ENCODE measurements at regions of chrX and their contacts with region 1.

Region 1: GRCh38 chrX:72276478-72276953 is 532 bp downstream of the RPS4X start:
- DNase-seq: no peak
- ATAC-seq: no peak
- H3K4me3 ChIP-seq: peak overlapping the region; percentile 99
- H3K27ac ChIP-seq: peak overlapping the region; percentile 91
- H3K4me1 ChIP-seq: peaks cover 7 to 11% of the 10 kb centered on the region in 2 experiments; a peak in 4 of 5 replicates
- H3K27me3 ChIP-seq: no peaks in the 10 kb centered on the region
- CTCF ChIP-seq: no peak
- EP300 ChIP-seq: no peak
- POLR2A ChIP-seq: no peak
- RAD21 ChIP-seq: no peak

Region 2: DNA sequence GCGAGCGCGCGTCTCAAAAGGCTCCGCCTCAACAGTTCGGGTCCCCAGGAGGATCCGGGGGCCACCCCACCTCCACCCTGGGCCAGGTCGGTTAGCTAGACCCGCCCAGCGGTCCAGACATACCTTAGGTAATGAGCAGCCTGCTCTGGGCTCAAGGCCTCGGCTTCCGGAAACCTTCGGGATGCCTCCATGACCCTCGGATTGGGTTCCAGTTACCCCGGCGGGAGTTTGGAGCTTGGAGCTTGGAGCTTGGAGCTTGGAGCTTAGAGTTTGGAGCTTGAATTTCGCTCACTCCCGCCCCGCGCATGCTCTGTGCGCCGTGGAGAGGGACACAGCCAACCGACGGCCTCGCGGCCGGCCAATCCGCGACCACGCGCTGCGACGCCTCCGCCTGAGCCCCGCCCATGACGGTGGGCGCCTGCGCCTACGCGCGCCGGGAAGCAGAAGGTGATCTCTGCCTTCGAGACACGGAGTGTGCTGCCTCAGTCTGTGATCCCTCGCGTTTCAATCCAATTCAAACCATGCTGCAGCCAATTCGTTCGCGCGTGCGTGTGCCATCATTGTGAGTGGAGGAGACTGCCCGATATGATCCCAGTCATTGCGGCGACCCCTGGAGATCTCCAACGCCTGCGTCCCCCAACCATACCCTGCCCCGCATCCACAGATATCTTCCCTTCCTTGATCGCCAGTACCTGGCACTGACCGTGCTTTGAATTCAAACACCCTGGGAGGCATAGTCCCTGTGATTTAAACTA is 37.6 kb before region 1 on chrX and contains the start of gene ERCC6L:
- CTCF ChIA-PET with region 1: no interaction called
- POLR2A ChIA-PET with region 1: interaction called, 16 read pairs
- in situ Hi-C with region 1: no loop called
- intact Hi-C with region 1: no loop called
- DNase-seq: peak; percentile 85 to 89 (median 86)
- ATAC-seq: peak; percentile 93
- H3K4me3 ChIP-seq: peak within 1 kb of the TSS; percentile 56
- H3K27ac ChIP-seq: peak within 1 kb of the TSS; percentile 82
- H3K4me1 ChIP-seq: peaks cover 0 to 3% of the 10 kb centered on the region in 2 experiments; a peak in 4 of 5 replicates
- H3K27me3 ChIP-seq: no peaks in the 10 kb centered on the region
- CTCF ChIP-seq: no peak
- EP300 ChIP-seq: no peak
- POLR2A ChIP-seq: peak; percentile 90
- RAD21 ChIP-seq: no peak
- polyA plus RNA-seq, gene ERCC6L: 6.4 to 13.3 TPM

Region 3: DNA sequence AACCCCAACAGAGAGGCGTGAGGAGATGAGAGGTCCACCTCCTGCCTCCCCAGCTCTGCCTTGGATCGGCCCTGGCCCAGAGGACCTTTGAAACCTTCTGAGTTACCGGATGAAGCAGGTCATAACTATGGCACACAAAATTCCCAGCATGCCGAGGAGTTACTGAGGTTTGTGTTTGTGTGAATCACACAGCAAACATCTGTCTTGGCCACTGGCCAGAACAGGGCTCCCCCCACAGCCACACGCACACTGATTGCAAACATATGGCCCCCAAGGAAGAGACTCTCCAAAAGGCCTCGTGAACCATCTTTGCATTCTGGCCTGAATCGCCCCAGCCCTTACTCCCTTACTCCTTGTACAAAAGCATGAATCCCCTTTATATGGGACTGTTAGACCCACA is 18.3 kb before region 1 on chrX:
- CTCF ChIA-PET with region 1: no interaction called
- POLR2A ChIA-PET with region 1: interaction called, 18 read pairs
- in situ Hi-C with region 1: no loop called
- intact Hi-C with region 1: no loop called
- DNase-seq: peak in 3 of 4 experiments; percentile 24 to 32 (median 25)
- ATAC-seq: peak; percentile 19; the same call in 2 of the 3 replicates
- H3K4me3 ChIP-seq: no peak overlapping the region
- H3K27ac ChIP-seq: no peak overlapping the region
- H3K4me1 ChIP-seq: peaks cover 0 to 3% of the 10 kb centered on the region in 2 experiments; a peak in 2 of 5 replicates
- H3K27me3 ChIP-seq: peaks cover 0 to 5% of the 10 kb centered on the region in 2 experiments; a peak in 1 of 5 replicates
- CTCF ChIP-seq: no peak
- EP300 ChIP-seq: no peak
- POLR2A ChIP-seq: no peak
- RAD21 ChIP-seq: no peak

Region 4: GRCh38 chrX:72399816-72400215 is 123.3 kb after region 1 on chrX:
- CTCF ChIA-PET with region 1: no interaction called
- POLR2A ChIA-PET with region 1: no interaction called
- in situ Hi-C with region 1: no loop called
- intact Hi-C with region 1: no loop called
- DNase-seq: no peak
- ATAC-seq: no peak
- H3K4me3 ChIP-seq: no peak overlapping the region
- H3K27ac ChIP-seq: no peak overlapping the region
- H3K4me1 ChIP-seq: peaks cover 0 to 2% of the 10 kb centered on the region in 2 experiments; a peak in 2 of 5 replicates
- H3K27me3 ChIP-seq: no peaks in the 10 kb centered on the region
- CTCF ChIP-seq: no peak
- EP300 ChIP-seq: no peak
- POLR2A ChIP-seq: no peak
- RAD21 ChIP-seq: no peak

Measured in K562 (cell line).